Activated CD4-positive, alpha-beta T cell treated with anti-CD3 and anti-CD28 coated beads for 36 hours (primary cell): ENCODE measurements at regions of chr7 and their contacts with region 1.

Region 1: GRCh38 chr7:55887821-55888247 is 578 bp downstream of the ZNF713 start:
- DNase-seq: peak; percentile 21
- ATAC-seq: no peak
- H3K4me3 Mint-ChIP-seq: peak overlapping the region; percentile 80
- H3K27ac Mint-ChIP-seq: peak overlapping the region; percentile 82
- H3K4me1 Mint-ChIP-seq: peaks cover 5% of the 10 kb centered on the region
- H3K27me3 Mint-ChIP-seq: no peaks in the 10 kb centered on the region

Region 2: GRCh38 chr7:55206235-55207029 is 681.4 kb before region 1 on chr7:
- CTCF ChIA-PET with region 1: no interaction called
- POLR2A ChIA-PET with region 1: no interaction called
- intact Hi-C with region 1: no loop called
- DNase-seq: peak; percentile 22
- ATAC-seq: peak; percentile 72
- H3K4me3 Mint-ChIP-seq: no peak overlapping the region
- H3K27ac Mint-ChIP-seq: no peak overlapping the region
- H3K4me1 Mint-ChIP-seq: no peaks in the 10 kb centered on the region
- H3K27me3 Mint-ChIP-seq: peaks cover 5% of the 10 kb centered on the region

Region 3: GRCh38 chr7:56106108-56107073 is 218.6 kb after region 1 on chr7 and contains the start of gene CHCHD2:
- CTCF ChIA-PET with region 1: no interaction called
- POLR2A ChIA-PET with region 1: no interaction called
- intact Hi-C with region 1: loop called (anchors 1 to 5 kb)
- DNase-seq: peak; percentile 96
- ATAC-seq: peak; percentile 98
- H3K4me3 Mint-ChIP-seq: peak within 1 kb of the TSS; percentile 90
- H3K27ac Mint-ChIP-seq: peak within 1 kb of the TSS; percentile 99
- H3K4me1 Mint-ChIP-seq: peaks cover 37% of the 10 kb centered on the region
- H3K27me3 Mint-ChIP-seq: no peaks in the 10 kb centered on the region
- total RNA-seq, gene CHCHD2: 537 to 693 TPM